ENCODE measurements at regions of chr22 and their contacts with region 1.

Region 1: GRCh38 chr22:38782402-38783094 is 11.4 kb downstream of the DNAL4 start:
- H3K4me3 Mint-ChIP-seq: peak overlapping the region; percentile 18
- H3K27ac Mint-ChIP-seq: peak overlapping the region; percentile 53
- H3K4me1 Mint-ChIP-seq: peaks cover 23% of the 10 kb centered on the region
- H3K27me3 Mint-ChIP-seq: no peaks in the 10 kb centered on the region

Region 2: GRCh38 chr22:38656256-38657044 is 126.1 kb before region 1 on chr22 and contains the starts of genes CBY1 and FAM227A:
- intact Hi-C with region 1: no loop called
- H3K4me3 Mint-ChIP-seq: peak within 1 kb of the TSS; percentile 90
- H3K27ac Mint-ChIP-seq: peak within 1 kb of the TSS; percentile 95
- H3K4me1 Mint-ChIP-seq: peaks cover 13% of the 10 kb centered on the region
- H3K27me3 Mint-ChIP-seq: no peaks in the 10 kb centered on the region

Region 3: GRCh38 chr22:38811241-38811640 is 28.7 kb after region 1 on chr22:
- intact Hi-C with region 1: loop called (anchors 1 kb)
- H3K4me3 Mint-ChIP-seq: no peak overlapping the region
- H3K27ac Mint-ChIP-seq: no peak overlapping the region
- H3K4me1 Mint-ChIP-seq: no peaks in the 10 kb centered on the region
- H3K27me3 Mint-ChIP-seq: peaks cover 37% of the 10 kb centered on the region